ENCODE measurements at regions of chr6 and their contacts with region 1.

Region 1: DNA sequence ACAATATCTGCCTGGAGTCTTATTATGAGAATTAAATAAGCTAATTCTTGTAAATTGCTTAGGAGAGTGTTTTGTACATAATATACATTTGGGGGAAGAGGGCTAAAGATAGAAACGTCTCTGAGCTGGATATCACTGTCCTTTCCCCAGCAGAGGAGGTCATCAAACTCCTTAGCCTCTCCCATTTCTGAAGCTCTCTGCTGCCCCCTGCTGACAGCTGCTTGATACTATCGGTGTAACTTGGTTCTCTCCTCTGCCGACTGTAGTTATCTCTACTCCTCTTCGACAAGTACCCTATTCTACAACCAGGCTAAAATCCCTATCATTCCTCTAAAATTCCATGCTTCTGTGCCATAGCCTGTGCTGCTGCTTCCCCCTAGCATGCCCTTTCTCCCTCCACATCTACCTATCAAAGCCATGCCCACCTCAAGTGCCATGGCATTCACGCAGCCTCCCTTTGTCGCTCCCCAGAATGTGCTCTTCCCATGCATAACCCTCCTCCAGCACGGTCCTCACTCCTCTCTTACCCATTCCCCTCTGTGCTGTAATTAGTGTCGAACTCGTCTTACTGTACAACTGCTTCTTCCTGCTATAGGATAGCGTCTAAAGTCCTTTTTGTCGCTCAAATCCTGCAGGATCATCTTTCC is 101.2 kb downstream of the EPM2A start:
- DNase-seq: peak; percentile 56
- ATAC-seq: peak; percentile 71
- H3K4me3 Mint-ChIP-seq: no peak overlapping the region
- H3K27ac Mint-ChIP-seq: no peak overlapping the region
- H3K4me1 Mint-ChIP-seq: peaks cover 6% of the 10 kb centered on the region
- H3K27me3 Mint-ChIP-seq: no peaks in the 10 kb centered on the region
- CTCF ChIP-seq: peak; percentile 45

Region 2: DNA sequence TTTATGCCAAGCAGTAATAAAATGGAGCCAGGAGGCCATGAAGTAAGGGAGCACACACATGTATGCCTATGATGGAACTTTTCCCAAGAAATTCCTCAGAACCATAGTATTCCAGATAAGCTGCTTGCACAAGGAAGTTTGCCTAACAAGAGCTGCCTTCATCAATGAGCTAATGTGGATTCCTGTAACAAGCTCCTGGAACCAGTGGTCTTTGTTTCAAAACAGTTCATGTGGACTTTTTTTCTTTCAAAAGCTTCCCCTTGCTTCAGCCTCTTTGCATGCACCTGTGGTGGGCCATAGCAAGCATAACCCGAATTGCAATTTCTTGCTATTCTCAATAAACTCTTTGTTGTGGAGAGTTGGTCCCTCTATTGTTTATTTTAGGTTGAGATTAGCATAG is 989.3 kb before region 1 on chr6:
- CTCF ChIA-PET with region 1: no interaction called
- POLR2A ChIA-PET with region 1: no interaction called
- intact Hi-C with region 1: loop called (anchors 2 kb)
- DNase-seq: no peak
- ATAC-seq: no peak
- H3K4me3 Mint-ChIP-seq: no peak overlapping the region
- H3K27ac Mint-ChIP-seq: no peak overlapping the region
- H3K4me1 Mint-ChIP-seq: peaks cover 14% of the 10 kb centered on the region
- H3K27me3 Mint-ChIP-seq: no peaks in the 10 kb centered on the region
- CTCF ChIP-seq: no peak

Region 3: GRCh38 chr6:144809120-144809519 is 825.0 kb before region 1 on chr6:
- CTCF ChIA-PET with region 1: no interaction called
- POLR2A ChIA-PET with region 1: no interaction called
- intact Hi-C with region 1: no loop called
- DNase-seq: no peak
- ATAC-seq: no peak
- H3K4me3 Mint-ChIP-seq: no peak overlapping the region
- H3K27ac Mint-ChIP-seq: no peak overlapping the region
- H3K4me1 Mint-ChIP-seq: no peaks in the 10 kb centered on the region
- H3K27me3 Mint-ChIP-seq: no peaks in the 10 kb centered on the region
- CTCF ChIP-seq: no peak

Region 4: GRCh38 chr6:145621776-145622175 is 12.3 kb before region 1 on chr6:
- CTCF ChIA-PET with region 1: interaction called, 10 read pairs
- POLR2A ChIA-PET with region 1: no interaction called
- intact Hi-C with region 1: no loop called
- DNase-seq: no peak
- ATAC-seq: no peak
- H3K4me3 Mint-ChIP-seq: no peak overlapping the region
- H3K27ac Mint-ChIP-seq: no peak overlapping the region
- H3K4me1 Mint-ChIP-seq: peaks cover 2% of the 10 kb centered on the region
- H3K27me3 Mint-ChIP-seq: no peaks in the 10 kb centered on the region
- CTCF ChIP-seq: no peak

Region 5: DNA sequence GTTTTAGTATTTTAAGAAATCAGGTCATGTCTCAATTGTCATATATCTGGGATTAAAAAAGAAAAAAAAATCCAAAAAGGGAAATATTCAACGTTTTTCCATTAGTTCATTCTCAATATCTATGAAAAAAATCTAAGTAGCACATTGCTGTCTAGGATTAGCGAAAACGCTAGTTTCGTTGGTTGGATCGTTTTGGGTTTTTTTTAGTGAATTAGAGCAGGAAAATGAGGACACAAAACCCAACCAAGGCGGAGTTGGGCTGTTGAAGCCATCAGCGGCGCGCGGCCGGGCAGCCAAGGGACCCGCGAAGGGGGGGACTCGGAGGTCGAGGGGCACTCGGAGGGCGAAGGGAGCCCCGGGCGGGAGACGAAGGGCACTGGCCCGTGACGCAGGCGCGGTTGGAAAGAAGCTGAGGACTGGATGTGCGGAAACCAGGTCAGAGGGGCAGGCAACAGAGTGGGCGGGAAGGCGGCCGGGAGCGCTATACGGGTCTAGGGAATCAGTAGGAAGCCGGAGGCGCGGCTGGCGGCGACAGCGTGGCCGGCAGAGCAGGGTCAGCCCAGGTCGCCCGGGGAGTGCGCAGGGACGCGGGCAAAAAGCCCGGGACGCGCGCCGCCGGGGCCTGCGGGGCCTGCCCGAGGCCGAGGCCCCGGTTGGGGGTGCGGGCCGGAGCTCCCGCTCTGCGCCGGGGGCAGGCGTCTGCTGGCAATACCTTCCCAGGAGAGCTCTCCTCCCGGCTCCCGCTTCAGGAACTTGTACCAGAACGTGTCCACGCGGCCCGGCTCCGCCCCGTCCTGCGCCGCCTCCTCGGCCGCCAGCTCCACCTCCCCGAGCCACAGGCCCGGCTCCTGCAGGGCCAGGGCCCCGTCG is 100.6 kb after region 1 on chr6:
- CTCF ChIA-PET with region 1: no interaction called
- POLR2A ChIA-PET with region 1: no interaction called
- intact Hi-C with region 1: no loop called
- DNase-seq: peak; percentile 77
- ATAC-seq: peak; percentile 72
- H3K4me3 Mint-ChIP-seq: peak overlapping the region; percentile 94
- H3K27ac Mint-ChIP-seq: peak overlapping the region; percentile 94
- H3K4me1 Mint-ChIP-seq: peaks cover 34% of the 10 kb centered on the region
- H3K27me3 Mint-ChIP-seq: no peaks in the 10 kb centered on the region
- CTCF ChIP-seq: no peak

Measured in activated B cell treated with CpG ODN at 0.5 μM for 24 hours (primary cell).